PC-3 (cell line): ENCODE measurements at regions of chr1 and their contacts with region 1.

Region 1: DNA sequence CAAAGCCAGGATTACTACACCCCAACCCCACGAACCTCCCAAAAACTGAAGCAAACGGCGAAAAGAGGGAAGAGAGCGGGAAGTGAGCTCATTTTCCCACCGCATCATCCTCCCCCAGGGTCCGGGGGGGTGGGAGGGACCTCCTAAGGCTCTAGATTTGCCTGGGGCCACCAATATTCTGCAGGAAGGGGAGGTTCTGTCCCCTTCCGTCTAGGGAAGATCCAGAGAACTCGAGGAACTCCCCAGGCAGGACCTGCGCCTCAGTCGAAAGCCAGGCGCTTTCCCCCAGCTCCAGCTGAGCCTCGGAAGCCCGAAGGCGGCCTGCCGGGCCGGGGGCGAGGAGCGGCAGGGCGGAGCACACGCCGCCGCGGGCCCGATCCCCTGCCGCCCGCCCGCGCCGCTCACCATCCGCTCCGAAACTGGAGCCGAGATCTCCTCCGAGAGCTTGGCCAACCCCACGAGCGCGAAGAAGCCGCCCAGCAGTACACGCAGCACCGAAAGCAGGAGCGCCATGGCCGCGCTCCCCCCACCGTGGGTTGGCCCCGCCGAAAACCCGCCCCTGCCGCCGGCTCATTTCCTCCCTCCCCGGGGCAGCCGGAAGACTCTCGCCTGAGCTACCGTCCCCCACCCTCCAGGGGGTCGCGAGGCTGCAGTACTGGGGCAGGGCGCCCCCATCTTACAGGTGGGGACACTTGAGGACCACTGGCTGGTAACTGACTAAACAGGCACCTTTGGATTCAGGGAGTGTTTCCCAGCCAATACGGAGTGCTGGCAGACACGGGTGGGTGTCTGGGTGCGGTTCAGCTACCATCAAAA is at the start of gene TMEM35B:
- DNase-seq: peak; percentile 48
- ATAC-seq: peak; percentile 72
- H3K4me3 ChIP-seq: peak within 1 kb of the TSS; percentile 98
- H3K27ac ChIP-seq: peak within 1 kb of the TSS; percentile 49
- H3K4me1 ChIP-seq: peaks cover 30% of the 10 kb centered on the region
- H3K27me3 ChIP-seq: no peaks in the 10 kb centered on the region
- CTCF ChIP-seq: no peak
- total RNA-seq, gene TMEM35B: 10.7 and 10.9 TPM in 2 replicates

Region 2: GRCh38 chr1:35047188-35047858 is 62.3 kb after region 1 on chr1:
- CTCF ChIA-PET with region 1: no interaction called
- POLR2A ChIA-PET with region 1: interaction called, 11 read pairs
- intact Hi-C with region 1: no loop called
- DNase-seq: peak; percentile 64
- ATAC-seq: peak; percentile 46
- H3K4me3 ChIP-seq: no peak overlapping the region
- H3K27ac ChIP-seq: no peak overlapping the region; the same call in 1 of the 2 replicates
- H3K4me1 ChIP-seq: peaks cover 8% of the 10 kb centered on the region; the same call in 1 of the 2 replicates
- H3K27me3 ChIP-seq: no peaks in the 10 kb centered on the region
- CTCF ChIP-seq: no peak

Region 3: GRCh38 chr1:35112668-35113067 is 127.7 kb after region 1 on chr1:
- CTCF ChIA-PET with region 1: no interaction called
- POLR2A ChIA-PET with region 1: no interaction called
- intact Hi-C with region 1: loop called (anchors 10 kb)
- DNase-seq: peak; percentile 31
- ATAC-seq: peak; percentile 13; the same call in 1 of the 2 replicates
- H3K4me3 ChIP-seq: no peak overlapping the region
- H3K27ac ChIP-seq: no peak overlapping the region
- H3K4me1 ChIP-seq: peaks cover 13% of the 10 kb centered on the region
- H3K27me3 ChIP-seq: no peaks in the 10 kb centered on the region
- CTCF ChIP-seq: peak; percentile 40; the same call in 1 of the 2 replicates

Region 4: DNA sequence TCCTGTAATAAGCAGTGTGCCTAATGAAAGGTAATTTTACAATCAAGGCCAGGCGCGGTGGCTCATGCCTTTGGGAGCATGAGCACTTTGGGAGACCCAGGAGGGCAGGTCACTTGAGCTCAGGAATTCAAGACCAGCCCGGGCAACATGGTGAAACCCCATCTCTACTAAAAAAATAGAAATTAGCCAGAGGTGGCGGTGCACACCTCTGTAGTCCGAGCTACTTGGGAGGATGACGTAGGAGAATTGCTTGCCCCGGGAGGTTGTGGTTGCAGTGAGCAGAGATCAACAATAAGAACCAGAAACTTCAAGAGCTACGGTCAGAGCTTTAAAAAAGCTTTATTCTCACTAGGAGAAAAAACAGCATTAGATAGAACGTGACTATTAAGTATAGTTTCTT is 172.9 kb after region 1 on chr1:
- CTCF ChIA-PET with region 1: no interaction called
- POLR2A ChIA-PET with region 1: no interaction called
- intact Hi-C with region 1: no loop called
- DNase-seq: no peak
- ATAC-seq: no peak
- H3K4me3 ChIP-seq: no peak overlapping the region
- H3K27ac ChIP-seq: no peak overlapping the region
- H3K4me1 ChIP-seq: no peaks in the 10 kb centered on the region
- H3K27me3 ChIP-seq: no peaks in the 10 kb centered on the region
- CTCF ChIP-seq: no peak

Region 5: DNA sequence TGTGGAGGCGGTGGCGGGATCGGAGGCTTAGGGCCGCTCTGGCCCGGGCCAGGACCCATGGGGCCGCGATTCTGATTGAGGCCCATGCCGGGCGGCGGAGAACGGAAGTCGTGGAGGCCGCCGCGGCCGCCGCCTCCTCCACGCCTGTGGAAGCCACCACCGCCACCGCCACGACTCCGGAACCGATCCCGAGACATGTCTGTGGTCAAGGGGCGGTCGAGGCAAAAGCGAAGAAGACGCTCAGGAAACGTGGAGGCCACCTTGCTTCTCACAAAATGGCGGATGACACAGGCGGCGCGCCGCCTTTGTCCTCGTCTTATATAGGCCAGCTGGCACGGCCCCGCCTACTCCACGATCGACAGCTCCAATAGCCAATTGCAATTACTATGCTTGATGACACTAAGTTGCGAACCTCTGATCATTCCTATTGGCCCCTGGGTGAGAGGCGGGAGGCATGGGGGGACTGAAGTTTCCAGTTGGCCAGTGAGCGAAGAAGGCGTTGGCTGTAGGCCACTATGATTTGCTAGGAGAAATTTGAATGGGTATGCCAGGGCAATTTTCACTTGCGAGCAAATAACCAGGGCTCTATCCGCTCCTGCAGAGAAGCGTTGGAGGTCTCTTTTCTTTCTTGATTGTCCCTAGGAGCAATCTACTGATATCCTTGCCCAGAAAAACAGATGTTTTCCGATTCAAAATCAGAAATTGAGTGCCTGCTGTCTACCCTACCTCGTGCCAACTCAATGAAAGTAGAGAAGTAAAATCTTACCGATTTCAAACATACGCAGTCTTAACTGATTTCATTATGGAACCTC is 208.1 kb after region 1 on chr1 and contains the start of gene SFPQ:
- CTCF ChIA-PET with region 1: no interaction called
- POLR2A ChIA-PET with region 1: interaction called, 4 read pairs
- intact Hi-C with region 1: loop called (anchors 1 kb)
- DNase-seq: peak; percentile 98
- ATAC-seq: peak; percentile 89
- H3K4me3 ChIP-seq: peak within 1 kb of the TSS; percentile 80
- H3K27ac ChIP-seq: peak within 1 kb of the TSS; percentile 59
- H3K4me1 ChIP-seq: 0 out of 2 replicates have a peak, but pooled peaks cover 11% of the 10 kb centered on the region
- H3K27me3 ChIP-seq: no peaks in the 10 kb centered on the region
- CTCF ChIP-seq: no peak
- total RNA-seq, gene SFPQ: 249 and 322 TPM in 2 replicates